Ascending aorta (tissue), 2 donors: ENCODE measurements at regions of chr4 and their contacts with region 1.

Region 1: GRCh38 chr4:56544573-56545131 is 39.1 kb downstream of the ARL9 start:
- DNase-seq: peak; percentile 14 to 89
- H3K4me3 ChIP-seq: peak overlapping the region; percentile 7 to 60
- H3K27ac ChIP-seq: no peak overlapping the region
- H3K4me1 ChIP-seq: no peaks in the 10 kb centered on the region
- H3K27me3 ChIP-seq: no peaks in the 10 kb centered on the region
- CTCF ChIP-seq: peak; percentile 84 to 99 (median 98)

Region 2: DNA sequence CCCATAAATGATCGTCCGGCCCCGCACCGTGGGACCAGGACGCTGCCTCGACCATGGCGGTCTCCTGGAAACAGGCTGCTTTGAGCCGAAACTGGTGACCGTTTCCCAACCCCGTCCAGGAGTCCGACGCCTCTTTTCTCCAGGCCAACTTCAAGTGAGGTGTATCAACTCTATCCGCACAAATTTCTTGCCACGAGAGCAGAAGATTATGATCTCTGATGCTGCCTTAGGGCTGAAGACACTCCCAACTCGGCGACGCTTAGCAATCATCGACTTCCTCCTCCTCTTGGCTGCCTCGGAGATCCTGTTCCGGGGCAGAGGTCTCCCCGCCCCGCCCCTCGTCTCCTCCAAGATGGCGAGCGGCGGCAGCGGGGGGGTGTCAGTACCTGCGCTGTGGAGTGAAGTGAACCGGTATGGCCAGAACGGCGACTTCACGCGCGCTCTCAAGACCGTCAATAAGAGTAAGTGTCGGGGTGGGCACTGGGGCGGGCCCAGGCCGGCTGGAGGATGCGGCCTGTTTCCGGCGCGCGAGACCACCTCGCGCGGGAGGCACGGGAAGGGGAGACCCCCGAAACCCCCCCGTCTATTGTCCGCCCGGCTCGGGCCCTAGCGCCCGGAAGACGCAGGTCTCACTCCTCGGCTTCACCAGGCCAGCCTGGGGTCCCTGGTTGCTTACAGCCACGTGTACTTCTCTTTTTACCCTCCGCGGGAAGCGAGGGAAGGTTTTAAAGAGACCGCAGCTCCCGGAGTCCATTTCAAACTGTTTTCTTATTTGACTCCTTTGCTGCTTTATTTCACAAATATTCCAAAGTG is 77.2 kb before region 1 on chr4 and contains the start of gene SRP72:
- intact Hi-C with region 1: loop called (anchors 2 kb)
- DNase-seq: peak; percentile 66 to 94
- H3K4me3 ChIP-seq: peak within 1 kb of the TSS; percentile 93 to 96
- H3K27ac ChIP-seq: peak within 1 kb of the TSS; percentile 84 to 93
- H3K4me1 ChIP-seq: peaks cover 8 to 22% of the 10 kb centered on the region in 2 donors
- H3K27me3 ChIP-seq: no peaks in the 10 kb centered on the region
- CTCF ChIP-seq: no peak
- total RNA-seq, gene SRP72: 89.4 TPM

Region 3: DNA sequence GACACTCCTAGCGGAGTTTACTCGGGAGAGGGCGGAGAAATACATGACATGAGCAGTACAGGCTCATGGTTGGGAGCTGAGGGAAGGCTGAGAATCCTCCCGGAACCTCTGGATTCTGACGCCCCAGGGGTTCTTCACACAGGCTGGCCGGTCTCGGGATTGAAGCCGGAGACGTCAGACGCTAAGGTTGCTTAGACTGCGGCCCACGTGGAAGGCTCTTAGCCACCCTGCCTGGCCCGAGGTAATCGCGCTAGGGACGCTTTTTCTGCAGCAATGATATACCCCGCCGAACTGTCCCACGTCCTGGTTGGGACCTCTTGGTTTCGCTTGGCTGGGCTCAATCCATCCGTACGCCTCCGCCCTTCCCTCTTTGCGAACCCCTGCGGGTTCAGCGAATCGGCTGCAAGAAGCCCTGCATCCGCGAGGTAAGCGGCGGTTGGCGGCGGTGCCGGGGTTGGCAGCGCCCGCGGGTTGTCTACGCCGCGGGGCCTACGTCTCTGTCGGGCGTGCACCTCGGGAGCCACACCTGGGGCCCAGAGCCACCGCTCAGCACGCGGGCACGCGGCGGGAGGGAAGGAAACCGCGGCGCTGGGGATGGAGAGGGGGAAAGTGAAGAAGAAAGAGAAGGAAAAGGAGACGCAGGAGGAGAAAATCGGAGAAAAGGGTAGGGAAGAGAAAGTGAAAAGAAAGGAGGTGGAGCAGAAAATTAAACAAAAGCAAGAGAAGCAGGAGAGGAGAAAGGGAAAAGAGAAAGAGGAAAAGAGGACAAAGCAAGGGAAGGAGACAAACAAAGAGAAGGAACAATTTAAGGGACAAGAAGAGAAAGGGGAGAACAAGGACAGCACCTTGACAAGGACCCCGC is 39.2 kb before region 1 on chr4 and contains the start of gene ARL9:
- intact Hi-C with region 1: loop called (anchors 2 kb)
- DNase-seq: peak in 1 of 2 donors; percentile 68
- H3K4me3 ChIP-seq: peak within 1 kb of the TSS; percentile 57 to 82
- H3K27ac ChIP-seq: peak within 1 kb of the TSS in 1 of 2 donors; percentile 26
- H3K4me1 ChIP-seq: peaks cover 0 to 7% of the 10 kb centered on the region in 2 donors
- H3K27me3 ChIP-seq: no peaks in the 10 kb centered on the region
- CTCF ChIP-seq: no peak
- total RNA-seq, gene ARL9: not detected

Region 4: GRCh38 chr4:56530269-56531148 is 14.1 kb before region 1 on chr4:
- intact Hi-C with region 1: loop called (anchors 1 kb)
- DNase-seq: peak; percentile 48 to 93
- H3K4me3 ChIP-seq: peak overlapping the region; percentile 55 to 63
- H3K27ac ChIP-seq: no peak overlapping the region
- H3K4me1 ChIP-seq: peaks cover 0 to 7% of the 10 kb centered on the region in 2 donors
- H3K27me3 ChIP-seq: no peaks in the 10 kb centered on the region
- CTCF ChIP-seq: no peak

Region 5: DNA sequence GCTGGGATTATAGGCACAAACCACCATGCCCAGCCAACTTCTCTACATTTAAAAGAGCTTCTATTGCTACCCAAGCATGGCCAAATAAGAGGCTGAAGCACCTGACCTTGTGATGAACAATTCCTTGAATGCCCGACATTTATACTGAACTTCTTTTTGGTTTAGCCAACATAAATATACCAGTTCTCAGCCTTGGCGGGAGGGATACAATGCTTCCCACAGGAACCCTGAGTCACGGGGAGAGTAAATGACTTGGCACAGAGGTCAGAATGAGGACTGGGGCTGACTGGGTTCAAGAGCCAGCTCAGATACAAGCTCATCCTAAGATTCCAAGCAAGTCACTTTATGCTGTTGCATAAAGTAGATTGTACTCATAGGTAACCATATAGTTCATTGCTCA is 130.3 kb after region 1 on chr4:
- intact Hi-C with region 1: no loop called
- DNase-seq: no peak
- H3K4me3 ChIP-seq: no peak overlapping the region
- H3K27ac ChIP-seq: no peak overlapping the region
- H3K4me1 ChIP-seq: no peaks in the 10 kb centered on the region
- H3K27me3 ChIP-seq: no peaks in the 10 kb centered on the region
- CTCF ChIP-seq: no peak

Region 6: GRCh38 chr4:56799824-56800756 is 255.4 kb after region 1 on chr4:
- intact Hi-C with region 1: loop called (anchors 2 kb)
- DNase-seq: peak; percentile 37 to 89
- H3K4me3 ChIP-seq: peak overlapping the region; percentile 69 to 81
- H3K27ac ChIP-seq: peak overlapping the region; percentile 69 to 74
- H3K4me1 ChIP-seq: peaks cover 0 to 3% of the 10 kb centered on the region in 2 donors
- H3K27me3 ChIP-seq: no peaks in the 10 kb centered on the region
- CTCF ChIP-seq: peak; percentile 81 to 88 (median 83)